Activated CD4-positive, alpha-beta memory T cell treated with anti-CD3 and anti-CD28 coated beads, Interleukin-2, amount 10 ng/mL, durations not matched to agents 7 days and 5 days (primary cell): ENCODE measurements at regions of chr1 and their contacts with region 1.

Region 1: GRCh38 chr1:21232044-21232443 is 55.3 kb upstream of the EIF4G3 start:
- DNase-seq: peak; percentile 34
- H3K4me3 Mint-ChIP-seq: no peak overlapping the region
- H3K27ac Mint-ChIP-seq: no peak overlapping the region
- H3K4me1 Mint-ChIP-seq: no peaks in the 10 kb centered on the region
- H3K27me3 Mint-ChIP-seq: no peaks in the 10 kb centered on the region

Region 2: DNA sequence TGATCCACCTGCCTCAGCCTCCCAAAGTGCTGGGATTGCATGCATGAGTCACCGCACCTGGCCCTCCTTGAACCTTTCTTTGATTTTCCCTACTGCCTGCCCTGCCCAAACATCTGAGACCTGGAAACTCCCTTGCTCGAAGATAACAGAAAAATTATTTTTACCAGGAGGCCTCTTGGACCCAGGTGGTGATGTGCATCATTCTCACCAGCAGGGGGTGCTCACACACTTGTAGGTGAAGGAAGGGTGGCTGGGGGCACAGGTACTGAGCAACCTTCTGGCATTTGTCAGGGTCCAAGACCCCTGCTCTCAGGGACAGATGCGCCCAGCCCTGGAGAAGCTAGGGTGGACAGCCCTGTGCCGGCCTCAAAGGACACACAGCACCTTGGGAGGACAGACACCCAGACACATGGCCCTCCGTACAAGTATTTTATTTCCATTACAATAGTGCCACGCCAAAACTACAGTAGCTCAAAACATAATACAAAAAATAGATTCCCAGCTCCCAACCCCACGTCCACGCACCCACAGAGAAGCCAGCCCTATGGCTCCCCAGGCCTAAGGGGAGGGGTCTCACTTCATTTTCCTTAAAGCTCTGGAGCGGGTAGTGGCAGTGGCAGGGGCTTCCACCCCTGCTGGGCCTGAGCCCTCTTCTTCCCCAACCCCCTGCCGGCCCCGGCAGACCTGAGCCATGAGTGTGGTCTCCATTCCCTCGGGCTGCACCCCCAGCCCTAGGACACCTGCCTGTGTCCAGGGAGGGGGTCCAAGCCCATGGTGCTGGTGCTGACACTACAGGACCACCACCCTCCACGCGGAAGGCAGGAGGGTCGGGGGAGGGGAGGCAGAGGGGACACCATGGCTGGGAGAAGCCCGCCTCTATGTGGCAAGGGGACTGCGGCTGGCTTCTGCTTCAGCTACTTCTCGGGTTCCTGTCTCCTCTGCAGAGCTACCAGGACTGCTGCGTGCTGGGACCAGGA is 14.9 kb before region 1 on chr1:
- CTCF ChIA-PET with region 1: interaction called, 20 read pairs
- POLR2A ChIA-PET with region 1: no interaction called
- DNase-seq: peak; percentile 73
- H3K4me3 Mint-ChIP-seq: no peak overlapping the region
- H3K27ac Mint-ChIP-seq: no peak overlapping the region
- H3K4me1 Mint-ChIP-seq: no peaks in the 10 kb centered on the region
- H3K27me3 Mint-ChIP-seq: no peaks in the 10 kb centered on the region

Region 3: DNA sequence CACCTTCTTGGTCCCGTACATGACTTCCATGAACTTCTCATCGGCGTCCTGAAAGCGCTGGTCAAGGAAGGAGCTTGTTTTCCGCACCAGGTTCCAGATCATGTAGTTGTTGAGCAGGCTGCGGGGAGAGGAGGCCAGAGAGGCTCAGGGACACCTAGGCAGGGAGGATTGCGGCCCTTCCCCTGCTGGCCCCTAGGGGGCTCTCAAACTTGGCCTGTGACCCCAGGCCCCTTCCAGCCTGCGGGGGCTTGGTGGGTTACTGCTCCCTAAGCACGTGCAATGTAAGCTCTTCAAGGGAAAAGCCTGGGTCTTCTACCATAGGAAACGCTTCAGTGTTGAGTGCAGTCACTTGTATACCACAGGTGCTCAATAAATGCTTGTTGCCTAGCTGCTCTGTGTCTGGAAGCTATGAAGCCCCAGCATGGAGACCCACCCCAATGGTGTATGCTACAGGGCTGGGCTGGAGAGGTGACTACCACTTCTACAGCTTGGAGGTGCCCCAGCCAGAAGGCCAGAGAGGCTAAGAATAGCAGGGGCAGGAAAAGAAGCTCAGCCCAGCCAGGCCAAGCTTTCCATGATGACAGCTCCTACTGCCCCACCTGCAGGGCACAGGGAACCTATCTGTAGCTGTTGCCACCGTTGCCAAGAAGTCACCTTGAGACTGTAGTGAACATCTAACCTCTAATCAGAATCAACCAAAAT is 13.1 kb after region 1 on chr1:
- CTCF ChIA-PET with region 1: interaction called, 13 read pairs
- POLR2A ChIA-PET with region 1: no interaction called
- DNase-seq: no peak
- H3K4me3 Mint-ChIP-seq: no peak overlapping the region
- H3K27ac Mint-ChIP-seq: no peak overlapping the region
- H3K4me1 Mint-ChIP-seq: no peaks in the 10 kb centered on the region
- H3K27me3 Mint-ChIP-seq: no peaks in the 10 kb centered on the region

Region 4: GRCh38 chr1:21280011-21280471 is 48.0 kb after region 1 on chr1:
- CTCF ChIA-PET with region 1: no interaction called
- POLR2A ChIA-PET with region 1: no interaction called
- DNase-seq: peak; percentile 47
- H3K4me3 Mint-ChIP-seq: peak overlapping the region; percentile 71
- H3K27ac Mint-ChIP-seq: peak overlapping the region; percentile 93
- H3K4me1 Mint-ChIP-seq: peaks cover 58% of the 10 kb centered on the region
- H3K27me3 Mint-ChIP-seq: no peaks in the 10 kb centered on the region

Region 5: DNA sequence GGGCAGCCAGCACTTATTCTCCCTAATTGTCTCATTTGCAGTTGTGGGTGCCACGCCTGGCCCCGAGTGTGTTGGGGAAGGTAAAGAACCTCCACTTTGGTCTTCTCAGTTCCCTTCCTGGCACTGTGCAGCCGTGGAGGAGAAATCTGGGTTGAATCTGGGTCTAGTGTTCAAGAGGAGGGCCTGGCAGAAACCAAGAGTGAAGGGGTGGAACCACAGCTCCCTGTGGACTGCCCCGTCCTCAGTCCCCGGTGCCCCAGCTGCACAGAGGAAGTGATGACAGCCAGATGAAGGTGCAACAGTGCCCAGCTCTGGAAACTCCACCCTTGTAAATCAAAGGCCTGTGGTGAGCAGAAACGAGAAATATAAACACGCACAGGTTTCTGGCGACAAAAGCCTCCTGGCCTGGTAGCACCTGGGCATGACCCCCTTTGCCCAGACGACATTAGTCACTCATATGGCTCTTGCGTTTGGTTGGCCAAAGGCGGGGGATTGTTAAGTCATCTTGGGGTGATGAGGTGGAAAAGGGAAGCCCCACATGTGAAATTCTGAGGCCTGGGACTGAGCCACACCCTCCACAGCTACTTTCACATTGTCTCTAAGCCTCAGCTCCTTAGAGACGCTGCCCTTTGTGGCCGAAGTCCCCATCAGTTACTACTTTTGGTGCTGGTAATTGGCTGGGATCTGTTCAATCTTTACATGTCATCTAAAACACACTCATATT is 62.4 kb after region 1 on chr1:
- CTCF ChIA-PET with region 1: no interaction called
- POLR2A ChIA-PET with region 1: no interaction called
- DNase-seq: peak; percentile 89
- H3K4me3 Mint-ChIP-seq: peak overlapping the region; percentile 79
- H3K27ac Mint-ChIP-seq: peak overlapping the region; percentile 98
- H3K4me1 Mint-ChIP-seq: peaks cover 85% of the 10 kb centered on the region
- H3K27me3 Mint-ChIP-seq: no peaks in the 10 kb centered on the region

Region 6: DNA sequence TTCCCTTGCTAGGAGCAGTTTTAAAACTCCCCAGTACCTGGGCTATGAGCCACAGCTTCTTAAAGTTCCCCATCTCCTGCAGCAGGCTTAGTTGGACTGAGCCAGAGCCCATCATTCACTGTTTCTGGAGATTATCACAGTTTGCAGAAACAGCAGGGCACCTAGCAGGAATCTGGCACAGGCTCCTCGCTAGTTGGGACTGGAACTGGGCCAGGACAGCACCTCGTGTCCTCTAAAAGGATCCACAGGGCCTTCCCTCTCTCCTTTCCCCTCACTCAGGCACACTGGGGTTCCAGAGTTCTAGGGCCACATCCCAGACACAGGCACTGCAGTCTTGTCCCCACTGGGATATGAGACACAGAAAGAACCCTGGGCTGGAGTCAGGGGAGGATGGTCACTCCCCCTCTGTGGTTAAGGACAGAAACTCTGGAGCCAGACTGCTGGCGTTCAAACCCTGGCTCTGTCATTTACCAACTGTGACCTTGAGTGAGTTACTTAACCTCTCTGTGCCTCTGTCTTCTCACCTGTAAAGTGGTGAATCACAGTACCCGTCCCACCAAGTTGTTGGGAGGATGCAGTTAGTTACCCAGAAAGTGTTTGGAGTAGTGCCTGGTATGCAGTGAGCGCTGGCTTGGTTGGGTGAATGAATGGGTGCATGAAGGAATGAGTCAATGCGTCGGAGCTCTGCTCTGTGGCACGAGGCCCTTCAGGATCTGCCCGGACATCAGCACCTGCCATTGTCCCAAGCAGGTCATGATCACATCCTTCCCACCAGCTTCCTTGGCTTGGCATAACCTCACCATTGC is 77.0 kb after region 1 on chr1:
- CTCF ChIA-PET with region 1: no interaction called
- POLR2A ChIA-PET with region 1: no interaction called
- DNase-seq: no peak
- H3K4me3 Mint-ChIP-seq: no peak overlapping the region
- H3K27ac Mint-ChIP-seq: peak overlapping the region; percentile 26
- H3K4me1 Mint-ChIP-seq: peaks cover 43% of the 10 kb centered on the region
- H3K27me3 Mint-ChIP-seq: no peaks in the 10 kb centered on the region

Region 7: GRCh38 chr1:21352586-21352985 is 120.5 kb after region 1 on chr1:
- CTCF ChIA-PET with region 1: interaction called, 12 read pairs
- POLR2A ChIA-PET with region 1: no interaction called
- DNase-seq: no peak
- H3K4me3 Mint-ChIP-seq: no peak overlapping the region
- H3K27ac Mint-ChIP-seq: no peak overlapping the region
- H3K4me1 Mint-ChIP-seq: no peaks in the 10 kb centered on the region
- H3K27me3 Mint-ChIP-seq: peaks cover 8% of the 10 kb centered on the region

Region 8: GRCh38 chr1:21368515-21369289 is 136.7 kb after region 1 on chr1:
- CTCF ChIA-PET with region 1: interaction called, 109 read pairs
- POLR2A ChIA-PET with region 1: interaction called, 3 read pairs
- DNase-seq: peak; percentile 60
- H3K4me3 Mint-ChIP-seq: no peak overlapping the region
- H3K27ac Mint-ChIP-seq: no peak overlapping the region
- H3K4me1 Mint-ChIP-seq: peaks cover 9% of the 10 kb centered on the region
- H3K27me3 Mint-ChIP-seq: no peaks in the 10 kb centered on the region